ENCODE measurements at regions of chr6 and their contacts with region 1.

Region 1: DNA sequence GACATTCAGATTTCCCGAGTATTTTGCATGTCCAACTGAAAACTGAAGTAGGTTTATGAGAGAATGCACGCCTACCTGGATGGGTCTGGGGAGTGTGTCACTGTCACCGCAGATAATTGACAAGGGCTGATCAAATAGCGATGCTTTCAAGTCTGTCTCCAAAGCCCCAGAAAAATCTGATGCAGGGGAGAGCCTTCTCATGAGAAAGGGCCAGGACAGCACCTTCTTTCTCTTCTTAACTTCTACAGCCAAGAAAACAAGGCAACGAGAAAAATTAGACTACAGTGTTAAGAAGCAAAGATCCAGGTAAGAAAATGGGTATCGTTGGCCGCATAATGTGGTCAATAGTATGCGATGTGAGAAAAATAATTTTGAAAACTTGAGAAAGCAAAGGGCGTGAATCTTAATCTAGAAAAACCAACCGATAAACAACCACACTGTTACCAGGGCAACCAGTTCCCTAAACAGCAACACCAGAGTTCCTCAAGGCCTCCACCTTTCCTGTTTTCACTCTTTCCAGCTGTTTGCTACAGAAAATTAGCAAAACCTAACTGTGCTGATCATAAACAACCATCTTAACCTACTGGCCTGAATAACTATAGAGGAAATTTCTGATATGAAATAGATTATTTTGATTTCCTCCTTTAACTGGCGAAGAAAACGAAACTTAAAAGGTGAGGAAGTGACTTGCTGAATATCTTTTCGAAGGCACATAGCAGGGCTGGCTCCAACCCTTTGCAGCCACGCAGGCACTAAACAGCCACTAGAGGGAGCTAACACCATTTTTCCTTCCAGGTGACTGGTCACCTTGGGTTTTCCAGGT is 2.6 kb downstream of the TAGAP start:
- DNase-seq: peak; percentile 59
- H3K4me3 ChIP-seq: no peak overlapping the region
- H3K27ac ChIP-seq: no peak overlapping the region
- H3K4me1 ChIP-seq: no peaks in the 10 kb centered on the region
- H3K27me3 ChIP-seq: no peaks in the 10 kb centered on the region
- CTCF ChIP-seq: peak; percentile 99

Region 2: DNA sequence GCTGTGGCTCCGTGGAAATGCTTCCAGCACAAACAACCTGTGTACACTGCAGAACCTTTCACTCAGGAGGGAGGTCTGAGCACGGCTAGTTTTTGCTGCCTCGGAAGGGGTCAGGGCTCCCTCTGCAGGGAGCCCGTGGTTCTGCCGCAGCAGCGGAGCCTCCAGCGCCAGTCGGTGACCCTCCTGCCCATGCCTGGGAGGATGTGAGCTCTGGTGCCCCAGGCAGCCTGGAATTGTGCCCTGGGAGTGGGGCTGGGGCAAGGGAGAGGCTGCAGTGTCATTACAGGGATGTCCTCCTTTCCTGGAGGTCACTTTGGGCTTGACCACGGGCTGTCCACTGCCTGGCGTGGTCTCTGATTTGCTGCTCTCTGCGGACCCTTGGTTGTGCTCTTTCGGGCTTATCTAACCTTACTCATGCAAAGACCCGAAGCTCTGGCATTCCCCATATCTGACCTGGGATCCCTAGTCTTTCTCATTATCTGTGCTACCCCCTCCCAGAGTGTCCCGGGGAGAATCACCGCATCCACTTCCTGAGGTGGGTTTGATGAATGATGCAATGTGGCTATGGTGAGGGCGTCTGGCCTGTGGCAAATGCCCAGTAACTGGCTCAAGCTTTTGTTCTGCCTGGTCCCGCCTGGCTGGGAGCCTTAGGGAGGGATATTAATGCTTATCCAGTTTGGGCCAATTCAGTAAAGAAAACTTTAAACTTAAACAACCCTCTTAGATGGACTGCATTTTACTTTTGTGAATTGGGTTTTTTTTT is 62.1 kb after region 1 on chr6:
- CTCF ChIA-PET with region 1: interaction called, 4 read pairs
- POLR2A ChIA-PET with region 1: no interaction called
- intact Hi-C with region 1: loop called (anchors 2 kb)
- DNase-seq: peak; percentile 59
- H3K4me3 ChIP-seq: no peak overlapping the region
- H3K27ac ChIP-seq: no peak overlapping the region
- H3K4me1 ChIP-seq: no peaks in the 10 kb centered on the region
- H3K27me3 ChIP-seq: no peaks in the 10 kb centered on the region
- CTCF ChIP-seq: peak; percentile 84

Region 3: DNA sequence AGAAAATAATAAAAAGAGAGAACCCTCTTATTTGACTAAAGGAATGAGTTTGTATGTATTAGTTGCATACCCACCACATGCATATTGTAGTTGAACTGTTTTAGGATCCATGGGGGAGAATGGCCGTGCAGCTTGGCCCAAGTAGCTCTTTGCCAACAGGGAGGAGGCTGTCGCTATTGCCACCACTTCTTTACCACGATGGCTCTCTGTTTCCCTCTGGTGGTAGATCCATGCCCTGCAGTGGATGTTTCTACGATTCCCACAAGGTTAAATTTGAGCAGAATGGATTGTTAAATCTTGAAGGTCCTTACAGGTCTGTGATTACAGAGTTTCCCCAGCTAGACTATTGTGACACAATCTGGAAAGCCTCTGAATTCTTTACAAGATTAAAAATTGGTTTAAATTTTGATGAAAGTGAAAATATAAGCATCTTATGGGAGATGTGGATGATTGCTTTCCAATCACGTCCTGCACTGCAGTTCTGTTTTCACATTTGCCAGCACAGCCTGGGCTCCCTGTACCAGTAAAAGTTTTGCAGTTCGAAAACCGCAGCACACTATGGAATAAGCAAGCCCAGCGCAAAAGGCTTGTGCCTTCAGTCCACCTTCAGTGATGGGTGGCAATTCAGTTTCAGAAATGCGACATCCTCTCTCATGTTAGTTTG is 92.6 kb after region 1 on chr6:
- CTCF ChIA-PET with region 1: interaction called, 8 read pairs
- POLR2A ChIA-PET with region 1: no interaction called
- intact Hi-C with region 1: loop called (anchors 10 kb)
- DNase-seq: peak; percentile 75
- H3K4me3 ChIP-seq: no peak overlapping the region
- H3K27ac ChIP-seq: no peak overlapping the region
- H3K4me1 ChIP-seq: no peaks in the 10 kb centered on the region
- H3K27me3 ChIP-seq: peaks cover 10% of the 10 kb centered on the region
- CTCF ChIP-seq: peak; percentile 93

Region 4: DNA sequence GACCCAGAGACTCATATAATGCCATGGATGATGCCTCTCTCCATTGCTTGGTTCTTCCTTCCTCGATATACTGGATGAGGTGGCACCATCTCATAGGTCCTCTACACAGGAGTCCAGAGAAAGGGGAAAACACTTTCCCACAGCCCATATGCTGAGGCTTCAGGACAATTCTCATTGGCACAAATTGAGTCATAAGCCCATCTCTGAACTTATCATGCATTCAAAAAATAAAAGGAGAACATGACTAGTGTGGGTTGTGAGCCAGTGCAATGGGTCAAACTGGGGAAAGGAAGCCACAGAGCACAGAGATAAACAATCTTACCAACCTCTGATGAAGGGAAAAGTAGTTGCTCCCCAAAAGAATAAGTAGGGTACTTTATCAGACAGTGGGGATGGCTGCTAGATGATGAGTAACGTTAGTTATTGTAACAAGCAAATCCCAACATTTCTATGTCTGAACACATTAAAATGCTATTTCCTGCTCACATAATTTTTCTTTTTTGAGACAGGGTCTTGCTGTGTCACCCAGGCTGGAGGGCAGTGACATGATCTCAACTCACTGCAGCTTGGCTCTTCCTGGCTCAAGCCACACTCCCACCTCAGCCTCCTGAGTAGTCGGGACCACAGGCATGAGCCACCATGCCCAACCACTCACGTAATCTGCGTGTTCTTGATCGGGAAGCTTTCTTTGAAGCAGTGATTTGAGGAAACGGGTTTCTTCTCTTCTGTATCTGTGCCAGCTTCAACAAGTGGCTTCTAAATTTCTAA is 623.8 kb after region 1 on chr6:
- CTCF ChIA-PET with region 1: interaction called, 12 read pairs
- POLR2A ChIA-PET with region 1: no interaction called
- intact Hi-C with region 1: no loop called
- DNase-seq: no peak
- H3K4me3 ChIP-seq: no peak overlapping the region
- H3K27ac ChIP-seq: no peak overlapping the region
- H3K4me1 ChIP-seq: no peaks in the 10 kb centered on the region
- H3K27me3 ChIP-seq: no peaks in the 10 kb centered on the region
- CTCF ChIP-seq: no peak